Psoas muscle (tissue), 8 donors: ENCODE measurements at regions of chr11 and their contacts with region 1.

Region 1: GRCh38 chr11:10490398-10491241 is 35.6 kb downstream of the AMPD3 start:
- DNase-seq: peak; percentile 84 to 93
- ATAC-seq: peak; percentile 91 to 96 (median 94)
- H3K4me3 ChIP-seq: peak overlapping the region; percentile 18
- H3K27ac ChIP-seq: peak overlapping the region; percentile 85
- H3K4me1 ChIP-seq: peaks cover 32% of the 10 kb centered on the region
- H3K27me3 ChIP-seq: no peaks in the 10 kb centered on the region
- CTCF ChIP-seq: no peak

Region 2: GRCh38 chr11:10272132-10272531 is 218.5 kb before region 1 on chr11:
- intact Hi-C with region 1: no loop called
- DNase-seq: no peak
- ATAC-seq: no peak
- H3K4me3 ChIP-seq: no peak overlapping the region
- H3K27ac ChIP-seq: no peak overlapping the region
- H3K4me1 ChIP-seq: peaks cover 11% of the 10 kb centered on the region
- H3K27me3 ChIP-seq: no peaks in the 10 kb centered on the region
- CTCF ChIP-seq: no peak

Region 3: DNA sequence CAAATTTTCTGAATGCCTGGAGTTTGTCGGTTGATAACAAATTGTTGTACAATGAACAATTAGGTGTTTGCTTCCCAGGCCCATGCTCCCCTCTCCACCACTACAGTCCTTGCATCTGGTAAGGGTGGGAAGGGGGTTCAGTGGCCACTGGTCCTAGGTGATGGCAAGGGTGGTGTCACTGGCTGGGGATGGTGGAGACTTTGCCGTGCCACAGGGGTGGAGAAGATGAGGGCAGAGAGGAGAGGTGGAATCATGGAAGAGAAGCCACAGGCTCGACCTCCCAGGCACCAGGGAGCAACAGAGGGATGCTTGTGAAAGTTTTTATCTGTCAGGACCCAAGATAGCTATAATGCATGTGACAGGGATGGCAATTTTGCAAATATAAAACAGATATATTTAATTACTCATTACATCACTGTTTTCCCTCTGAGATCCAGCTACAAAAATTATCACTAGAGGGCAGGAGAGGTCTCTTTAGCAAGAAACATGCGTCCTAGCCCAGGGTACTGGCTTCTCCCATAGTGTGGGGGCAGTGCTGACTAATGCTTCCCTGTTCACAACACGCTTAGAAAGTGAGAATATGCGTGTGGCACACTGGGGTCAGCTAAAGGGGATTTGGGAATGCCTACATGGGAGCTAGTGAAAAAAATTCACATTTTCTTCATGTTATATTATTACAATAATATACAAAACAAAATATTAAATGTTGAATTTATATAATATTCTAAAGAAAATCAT is 84.6 kb before region 1 on chr11:
- intact Hi-C with region 1: loop called in 1 of 2 experiments (anchors 5 kb)
- DNase-seq: peak; percentile 53 to 70
- ATAC-seq: peak; percentile 79 to 84 (median 82)
- H3K4me3 ChIP-seq: no peak overlapping the region
- H3K27ac ChIP-seq: peak overlapping the region; percentile 69
- H3K4me1 ChIP-seq: peaks cover 30% of the 10 kb centered on the region
- H3K27me3 ChIP-seq: no peaks in the 10 kb centered on the region
- CTCF ChIP-seq: peak; percentile 78

Region 4: GRCh38 chr11:10413268-10413667 is 77.4 kb before region 1 on chr11:
- intact Hi-C with region 1: loop called (anchors 2 to 5 kb)
- DNase-seq: no peak
- ATAC-seq: peak in 3 of 4 donors; percentile 42 to 45 (median 43)
- H3K4me3 ChIP-seq: no peak overlapping the region
- H3K27ac ChIP-seq: no peak overlapping the region
- H3K4me1 ChIP-seq: peaks cover 10% of the 10 kb centered on the region
- H3K27me3 ChIP-seq: no peaks in the 10 kb centered on the region
- CTCF ChIP-seq: no peak

Region 5: DNA sequence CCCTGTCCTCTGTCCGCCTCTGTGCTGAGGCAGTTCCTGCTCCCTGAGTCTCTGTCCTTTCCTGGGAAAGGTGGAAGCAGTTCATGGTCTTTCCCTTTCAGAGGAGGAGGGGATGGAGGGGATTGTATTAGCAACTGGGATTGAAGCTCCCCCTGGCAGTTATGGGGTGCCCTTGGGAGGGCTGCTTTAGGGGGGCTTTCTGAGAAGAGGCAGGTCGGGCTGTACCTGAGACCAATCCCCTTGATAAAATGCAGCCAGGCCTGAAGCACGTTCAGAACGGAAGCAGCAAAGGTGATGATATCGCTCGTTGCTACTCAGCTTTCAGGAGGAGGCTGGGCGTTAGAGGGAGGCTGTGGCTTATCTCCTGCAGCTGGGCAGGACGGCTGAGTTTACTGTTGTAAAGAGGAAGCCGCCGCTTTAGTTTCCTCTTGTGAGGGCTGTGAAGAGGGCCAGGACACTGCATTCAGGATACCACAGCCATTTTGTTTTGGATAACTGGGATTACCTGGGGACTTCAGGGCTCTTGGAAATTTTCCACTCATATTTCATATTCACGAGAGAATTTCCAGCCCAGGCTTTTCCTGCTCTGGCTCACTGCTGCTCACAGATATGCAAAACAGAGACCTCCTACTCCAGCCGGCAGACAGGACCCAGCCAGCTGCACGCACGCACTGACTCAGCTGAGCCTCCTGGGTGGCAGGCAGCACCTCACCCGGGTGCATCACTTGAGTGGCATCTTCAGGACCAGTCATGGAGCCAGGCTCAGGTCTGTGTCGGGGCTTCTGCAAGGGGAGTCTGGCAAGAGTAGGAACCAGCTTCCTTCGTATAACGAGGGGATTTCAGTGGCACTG is 34.8 kb before region 1 on chr11:
- intact Hi-C with region 1: loop called in 1 of 2 experiments (anchors 2 kb)
- DNase-seq: peak; percentile 53 to 80
- ATAC-seq: peak; percentile 45 to 69 (median 58)
- H3K4me3 ChIP-seq: peak overlapping the region; percentile 75
- H3K27ac ChIP-seq: peak overlapping the region; percentile 96
- H3K4me1 ChIP-seq: peaks cover 38% of the 10 kb centered on the region
- H3K27me3 ChIP-seq: peaks cover 0 to 4% (median 0%) of the 10 kb centered on the region in 3 donors
- CTCF ChIP-seq: no peak